Activated CD4-positive, alpha-beta memory T cell treated with anti-CD3 and anti-CD28 coated beads for 36 hours (primary cell): ENCODE measurements at regions of chr13 and their contacts with region 1.

Region 1: GRCh38 chr13:77345150-77345780 is 18.4 kb upstream of the MYCBP2 start:
- DNase-seq: peak; percentile 53
- H3K4me3 Mint-ChIP-seq: peak overlapping the region; percentile 51
- H3K27ac Mint-ChIP-seq: peak overlapping the region; percentile 90
- H3K4me1 Mint-ChIP-seq: peaks cover 24% of the 10 kb centered on the region
- H3K27me3 Mint-ChIP-seq: no peaks in the 10 kb centered on the region

Region 2: DNA sequence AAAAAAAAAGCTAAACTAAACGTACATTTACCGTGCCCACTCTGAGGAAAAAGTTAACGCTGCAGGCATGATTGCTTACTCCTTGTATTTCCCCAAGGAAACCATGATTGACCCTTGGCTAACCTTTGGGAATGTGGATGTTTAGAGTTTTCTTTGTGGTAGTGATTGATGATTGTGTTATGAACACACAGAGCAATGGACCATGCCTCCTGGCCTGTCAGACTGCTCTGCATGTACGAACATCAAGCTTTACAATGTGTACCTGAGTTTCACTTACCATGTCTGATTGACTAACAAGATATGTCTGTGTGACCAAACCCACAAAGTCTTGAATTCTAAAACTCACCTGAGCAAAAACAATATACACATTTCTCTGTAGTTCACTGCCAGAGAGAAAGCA is 53.5 kb before region 1 on chr13:
- CTCF ChIA-PET with region 1: no interaction called
- POLR2A ChIA-PET with region 1: no interaction called
- intact Hi-C with region 1: loop called (anchors 1 kb)
- DNase-seq: no peak
- H3K4me3 Mint-ChIP-seq: no peak overlapping the region
- H3K27ac Mint-ChIP-seq: peak overlapping the region; percentile 42
- H3K4me1 Mint-ChIP-seq: peaks cover 39% of the 10 kb centered on the region
- H3K27me3 Mint-ChIP-seq: no peaks in the 10 kb centered on the region

Region 3: DNA sequence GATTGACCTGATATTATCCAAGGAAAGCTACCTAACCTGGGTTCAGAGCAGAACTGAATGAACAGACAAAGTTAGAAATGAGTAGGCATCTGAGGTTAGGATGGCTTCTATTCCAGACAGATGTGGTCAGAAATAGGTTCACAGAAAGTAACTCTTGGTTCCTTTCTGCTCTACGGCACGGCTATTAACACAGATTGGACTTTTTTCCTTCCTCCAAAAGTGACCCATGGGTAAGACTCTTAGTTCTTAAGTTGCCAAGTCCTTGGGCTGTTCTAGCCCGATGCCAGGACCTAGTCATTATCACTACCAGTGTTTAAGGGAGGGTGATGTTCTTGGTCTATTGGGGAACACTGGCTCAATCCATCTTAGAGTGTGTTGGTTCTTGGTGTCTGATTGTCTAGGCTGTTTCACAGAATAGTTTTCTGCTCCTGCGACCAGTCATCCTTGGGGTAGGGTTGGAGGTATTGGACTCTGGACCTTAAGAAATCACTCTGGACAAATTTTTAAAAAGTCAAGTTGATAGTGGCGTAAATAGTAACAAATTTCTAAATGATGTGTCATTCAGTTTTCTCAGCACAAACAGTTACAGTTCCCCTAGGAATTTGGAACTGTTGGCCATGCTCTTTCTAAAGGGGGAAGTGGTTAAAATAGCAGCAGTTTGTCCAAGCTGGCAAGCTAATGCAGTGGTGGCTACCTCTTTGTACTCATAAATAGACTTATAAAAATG is 41.8 kb after region 1 on chr13:
- CTCF ChIA-PET with region 1: no interaction called
- POLR2A ChIA-PET with region 1: interaction called, 7 read pairs
- intact Hi-C with region 1: loop called (anchors 1 kb)
- DNase-seq: no peak
- H3K4me3 Mint-ChIP-seq: no peak overlapping the region
- H3K27ac Mint-ChIP-seq: no peak overlapping the region
- H3K4me1 Mint-ChIP-seq: peaks cover 16% of the 10 kb centered on the region
- H3K27me3 Mint-ChIP-seq: peaks cover 1% of the 10 kb centered on the region

Region 4: GRCh38 chr13:77429320-77430142 is 84.3 kb after region 1 on chr13:
- CTCF ChIA-PET with region 1: no interaction called
- POLR2A ChIA-PET with region 1: interaction called, 5 read pairs
- intact Hi-C with region 1: loop called (anchors 1 kb)
- DNase-seq: peak; percentile 80
- H3K4me3 Mint-ChIP-seq: peak overlapping the region; percentile 7
- H3K27ac Mint-ChIP-seq: peak overlapping the region; percentile 77
- H3K4me1 Mint-ChIP-seq: peaks cover 17% of the 10 kb centered on the region
- H3K27me3 Mint-ChIP-seq: no peaks in the 10 kb centered on the region

Region 5: GRCh38 chr13:77565635-77566034 is 220.4 kb after region 1 on chr13:
- CTCF ChIA-PET with region 1: no interaction called
- POLR2A ChIA-PET with region 1: no interaction called
- intact Hi-C with region 1: loop called (anchors 5 kb)
- DNase-seq: no peak
- H3K4me3 Mint-ChIP-seq: no peak overlapping the region
- H3K27ac Mint-ChIP-seq: no peak overlapping the region
- H3K4me1 Mint-ChIP-seq: no peaks in the 10 kb centered on the region
- H3K27me3 Mint-ChIP-seq: peaks cover 14% of the 10 kb centered on the region